OCI-LY7 (cell line): ENCODE measurements at regions of chr21 and their contacts with region 1.

Region 1: GRCh38 chr21:42187976-42188653 is 30.8 kb upstream of the ABCG1 start:
- DNase-seq: peak; percentile 96
- H3K4me3 ChIP-seq: peak overlapping the region; percentile 49
- H3K27ac ChIP-seq: peak overlapping the region; percentile 98
- H3K4me1 ChIP-seq: peaks cover 68% of the 10 kb centered on the region
- CTCF ChIP-seq: no peak

Region 2: DNA sequence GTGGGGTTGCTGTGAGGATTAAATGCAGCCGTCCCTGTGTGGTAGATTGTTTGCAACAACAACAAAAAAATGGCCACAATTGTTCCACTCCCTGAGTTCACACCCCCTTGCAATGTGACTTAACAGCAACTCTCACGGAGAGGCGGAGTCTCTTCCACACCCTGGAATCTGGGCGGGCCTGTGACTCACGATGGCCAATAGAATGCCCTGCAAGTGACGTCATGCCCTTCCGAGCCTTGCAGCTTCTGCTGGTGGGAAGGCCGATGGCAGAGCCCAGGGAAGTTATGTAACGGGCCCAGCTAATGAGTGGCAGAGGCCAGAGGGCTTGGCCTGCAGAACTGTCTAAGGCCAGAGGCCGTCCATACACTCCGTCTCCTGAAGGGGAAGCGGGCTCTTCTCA is 509.2 kb before region 1 on chr21:
- CTCF ChIA-PET with region 1: no interaction called
- POLR2A ChIA-PET with region 1: no interaction called
- intact Hi-C with region 1: no loop called
- DNase-seq: no peak
- H3K4me3 ChIP-seq: no peak overlapping the region
- H3K27ac ChIP-seq: no peak overlapping the region
- H3K4me1 ChIP-seq: no peaks in the 10 kb centered on the region
- CTCF ChIP-seq: no peak

Region 3: GRCh38 chr21:42171091-42172053 is 16.7 kb before region 1 on chr21:
- CTCF ChIA-PET with region 1: no interaction called
- POLR2A ChIA-PET with region 1: interaction called, 13 read pairs
- intact Hi-C with region 1: no loop called
- DNase-seq: peak; percentile 57
- H3K4me3 ChIP-seq: peak overlapping the region; percentile 8
- H3K27ac ChIP-seq: peak overlapping the region; percentile 50
- H3K4me1 ChIP-seq: peaks cover 36% of the 10 kb centered on the region
- CTCF ChIP-seq: no peak

Region 4: DNA sequence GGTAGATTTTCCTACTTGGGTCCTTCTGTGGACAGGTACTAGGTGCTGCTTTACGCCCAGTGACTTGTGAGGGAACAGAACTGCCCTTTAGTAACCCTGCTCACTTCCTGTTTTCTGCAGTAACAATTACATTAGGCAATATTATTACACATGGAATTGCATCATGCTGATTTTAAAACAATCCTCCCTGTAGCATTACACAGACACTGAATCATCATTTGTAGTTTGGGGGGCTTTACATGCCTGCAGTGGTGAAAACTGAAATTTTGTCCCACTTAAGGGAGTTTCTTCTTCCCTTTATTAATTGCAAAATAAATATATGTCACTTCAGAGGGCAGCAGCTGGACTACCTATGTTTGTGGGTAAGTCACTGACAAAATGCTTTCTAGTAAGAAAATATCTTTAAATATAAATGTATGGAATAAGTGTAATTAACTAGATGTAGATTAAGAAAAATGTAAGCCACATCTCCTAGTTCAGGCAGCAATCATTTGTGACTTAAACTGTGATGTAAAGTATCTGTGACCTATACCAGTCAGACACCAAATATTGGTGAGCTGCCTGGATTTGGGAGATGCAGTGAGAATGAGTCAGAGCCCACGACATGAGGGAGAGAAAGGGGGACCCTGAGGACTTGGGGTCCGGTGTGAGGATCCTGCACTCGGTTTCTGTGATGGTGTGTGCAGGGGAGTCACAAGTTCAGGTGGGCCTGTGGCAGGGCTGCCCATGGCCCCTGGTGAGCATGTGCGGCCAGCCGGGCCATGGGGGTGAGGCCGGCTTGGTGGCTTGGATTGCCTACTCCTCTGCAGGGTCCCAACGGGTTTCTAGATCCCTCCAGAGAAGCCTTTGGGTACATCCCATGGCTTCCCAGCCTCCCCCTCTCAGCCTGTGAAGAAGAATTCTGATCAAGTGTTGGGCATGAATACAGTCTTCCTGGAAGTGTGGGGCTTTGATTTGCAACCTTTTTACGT is 11.7 kb after region 1 on chr21:
- CTCF ChIA-PET with region 1: interaction called, 8 read pairs
- POLR2A ChIA-PET with region 1: interaction called, 26 read pairs
- intact Hi-C with region 1: no loop called
- DNase-seq: peak; percentile 79
- H3K4me3 ChIP-seq: peak overlapping the region; percentile 47
- H3K27ac ChIP-seq: peak overlapping the region; percentile 61
- H3K4me1 ChIP-seq: peaks cover 62% of the 10 kb centered on the region
- CTCF ChIP-seq: no peak

Region 5: GRCh38 chr21:42227909-42228708 is 40.0 kb after region 1 on chr21:
- CTCF ChIA-PET with region 1: no interaction called
- POLR2A ChIA-PET with region 1: interaction called, 17 read pairs
- intact Hi-C with region 1: loop called (anchors 1 kb)
- DNase-seq: peak; percentile 94
- H3K4me3 ChIP-seq: peak overlapping the region; percentile 39
- H3K27ac ChIP-seq: peak overlapping the region; percentile 81
- H3K4me1 ChIP-seq: peaks cover 99% of the 10 kb centered on the region
- CTCF ChIP-seq: no peak

Region 6: DNA sequence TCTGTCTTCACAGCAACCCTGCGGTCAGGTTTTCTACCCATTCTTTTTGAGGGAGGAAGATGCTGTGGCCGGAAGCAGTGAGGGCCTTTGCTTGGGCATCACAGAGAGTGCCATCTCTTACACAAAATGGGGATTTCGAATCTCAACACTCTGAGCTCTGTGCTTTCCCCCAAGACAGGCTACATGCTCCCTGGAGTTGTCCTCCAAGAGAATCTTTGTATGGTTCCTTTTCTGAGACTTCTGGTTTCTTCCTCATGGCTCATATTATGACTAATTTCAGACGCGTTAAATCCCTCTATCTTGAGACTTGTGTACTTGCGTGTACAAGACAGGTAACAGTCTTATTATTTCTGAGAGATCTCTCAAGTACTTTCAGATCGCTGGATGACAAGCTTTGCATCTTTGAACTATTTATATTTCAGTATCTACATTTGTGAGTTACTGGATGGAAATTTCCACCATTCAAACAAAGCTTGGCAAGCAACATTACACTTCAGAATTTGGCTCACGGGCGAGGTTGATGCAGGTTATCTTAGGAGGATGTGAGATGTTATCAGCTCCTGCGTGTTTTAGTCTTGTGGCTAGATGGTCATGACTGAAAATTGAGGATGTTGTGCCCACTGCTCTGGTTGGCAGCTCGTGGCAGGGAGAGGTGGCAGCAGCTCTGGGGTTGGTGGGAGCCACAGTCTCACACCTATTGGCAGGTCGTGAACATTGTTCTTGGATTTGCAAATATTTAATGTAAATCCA is 50.2 kb after region 1 on chr21:
- CTCF ChIA-PET with region 1: interaction called, 3 read pairs
- POLR2A ChIA-PET with region 1: interaction called, 28 read pairs
- intact Hi-C with region 1: loop called (anchors 1 kb)
- DNase-seq: peak; percentile 33
- H3K4me3 ChIP-seq: peak overlapping the region; percentile 24
- H3K27ac ChIP-seq: peak overlapping the region; percentile 99
- H3K4me1 ChIP-seq: peaks cover 95% of the 10 kb centered on the region
- CTCF ChIP-seq: no peak; the same call in 1 of the 2 replicates

Region 7: DNA sequence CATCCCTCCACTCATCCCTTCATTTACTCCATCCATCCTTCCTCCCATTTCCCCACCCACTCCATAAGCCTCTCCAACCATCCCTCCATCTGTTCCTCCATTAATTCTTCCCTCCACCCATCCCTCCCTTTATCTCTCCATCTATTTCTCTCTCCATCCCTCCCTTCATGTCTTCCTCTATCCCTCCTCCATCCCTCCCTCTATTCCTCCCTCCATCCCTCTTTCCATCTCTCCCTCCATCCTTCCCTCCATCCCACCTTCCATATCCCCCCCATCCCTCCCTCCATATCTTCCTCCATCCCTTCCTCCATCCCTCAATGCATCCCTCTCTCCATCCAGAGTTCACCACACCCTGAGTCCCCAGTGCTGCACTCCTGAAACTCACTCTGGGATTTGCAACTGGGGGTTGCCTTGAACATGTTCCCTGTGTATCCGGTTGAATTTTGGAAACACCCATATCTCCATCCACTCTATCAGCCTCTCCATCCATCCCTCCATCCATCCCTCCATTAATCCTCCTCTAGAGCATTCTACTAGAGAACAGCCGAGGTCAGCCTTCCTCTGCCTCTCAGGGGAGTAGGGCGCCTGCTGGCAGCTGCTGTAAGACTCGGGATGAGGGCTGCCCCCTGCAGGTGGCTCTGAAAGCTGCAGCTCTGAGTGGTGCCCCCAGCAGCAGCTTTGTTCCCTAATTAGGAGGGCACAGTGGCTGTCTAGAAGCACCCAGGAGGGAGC is 70.2 kb after region 1 on chr21:
- CTCF ChIA-PET with region 1: interaction called, 6 read pairs
- POLR2A ChIA-PET with region 1: interaction called, 5 read pairs
- intact Hi-C with region 1: loop called (anchors 2 kb)
- DNase-seq: peak; percentile 87
- H3K4me3 ChIP-seq: no peak overlapping the region
- H3K27ac ChIP-seq: no peak overlapping the region
- H3K4me1 ChIP-seq: peaks cover 48% of the 10 kb centered on the region
- CTCF ChIP-seq: peak; percentile 99